ENCODE measurements at regions of chr2 and their contacts with region 1.

Region 1: DNA sequence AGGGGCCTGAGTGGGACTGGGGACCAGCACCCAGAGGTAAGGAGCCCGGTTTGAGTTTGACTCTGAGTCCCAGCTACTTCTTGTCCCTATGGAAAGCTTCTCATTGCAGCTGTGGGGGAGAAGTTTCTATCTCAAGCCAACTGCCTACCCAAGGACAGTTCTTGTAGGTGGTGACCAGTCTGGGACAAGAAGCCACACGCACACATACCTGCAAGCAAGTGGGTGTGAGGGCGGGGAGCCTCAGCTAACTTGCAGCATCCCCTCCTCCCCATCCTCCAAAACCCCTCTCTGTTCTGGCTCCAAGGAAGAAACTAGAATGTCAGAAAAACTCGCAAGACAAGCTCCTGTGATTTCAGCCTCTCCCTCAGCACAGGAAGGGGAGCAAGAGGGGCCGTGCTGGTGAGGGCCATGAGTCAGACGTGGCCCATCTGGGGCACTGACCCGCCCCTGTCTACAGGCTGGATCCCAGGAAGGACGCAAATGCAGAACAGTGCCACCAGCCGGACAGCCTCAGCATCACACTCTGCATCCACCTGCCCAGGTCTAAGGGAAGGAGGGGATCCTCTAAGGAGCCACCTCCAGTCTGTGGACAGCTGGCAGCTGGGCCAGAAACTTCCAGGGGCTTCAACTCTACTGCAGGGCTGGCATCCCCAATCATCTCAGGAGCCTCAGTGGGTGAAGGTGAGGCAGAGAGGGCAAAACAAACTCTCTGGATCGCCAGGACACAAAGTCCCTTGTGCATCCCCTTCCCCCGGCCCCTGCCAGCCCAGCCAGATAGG is 103.4 kb downstream of the TNS1 start:
- DNase-seq: peak; percentile 69 to 84 (median 73)
- H3K4me3 ChIP-seq: no peak overlapping the region
- H3K27ac ChIP-seq: peak overlapping the region in 1 of 2 donors; percentile 66
- H3K4me1 ChIP-seq: peaks cover 53% of the 10 kb centered on the region
- H3K27me3 ChIP-seq: no peaks in the 10 kb centered on the region
- CTCF ChIP-seq: peak; percentile 28 to 63 (median 54)
- EP300 ChIP-seq: no peak
- POLR2A ChIP-seq: peak; percentile 8

Region 2: GRCh38 chr2:217978536-217979165 is 79.2 kb after region 1 on chr2:
- intact Hi-C with region 1: loop called in 3 of 4 experiments (anchors 5 to 10 kb)
- DNase-seq: peak; percentile 69 to 82 (median 77)
- H3K4me3 ChIP-seq: peak overlapping the region; percentile 61
- H3K27ac ChIP-seq: peak overlapping the region; percentile 91 to 93
- H3K4me1 ChIP-seq: peaks cover 42% of the 10 kb centered on the region
- H3K27me3 ChIP-seq: no peaks in the 10 kb centered on the region
- CTCF ChIP-seq: no peak
- EP300 ChIP-seq: no peak
- POLR2A ChIP-seq: no peak